Activated T-helper 2 cell treated with anti-CD3 and anti-CD28 coated beads, Interferon-gamma antibody, Interleukin-2, Interleukin-4, amounts not matched to agents 10 μg/mL and 5 μg/mL and 100 μg/mL, durations not matched to agents 14 hours and 24 hours and 36 hours (primary cell): ENCODE measurements at regions of chr4 and their contacts with region 1.

Region 1: GRCh38 chr4:40699648-40700047 is 50.1 kb upstream of the NSUN7 start:
- DNase-seq: no peak
- H3K4me3 Mint-ChIP-seq: peak overlapping the region; percentile 2
- H3K27ac Mint-ChIP-seq: peak overlapping the region; percentile 74
- H3K4me1 Mint-ChIP-seq: peaks cover 37% of the 10 kb centered on the region
- H3K27me3 Mint-ChIP-seq: no peaks in the 10 kb centered on the region

Region 2: GRCh38 chr4:40462326-40462725 is 237.3 kb before region 1 on chr4:
- intact Hi-C with region 1: loop called (anchors 10 kb)
- DNase-seq: no peak
- H3K4me3 Mint-ChIP-seq: no peak overlapping the region
- H3K27ac Mint-ChIP-seq: peak overlapping the region; percentile 17
- H3K4me1 Mint-ChIP-seq: peaks cover 32% of the 10 kb centered on the region
- H3K27me3 Mint-ChIP-seq: no peaks in the 10 kb centered on the region

Region 3: GRCh38 chr4:40550948-40551462 is 148.6 kb before region 1 on chr4:
- intact Hi-C with region 1: loop called (anchors 5 kb)
- DNase-seq: peak; percentile 21
- H3K4me3 Mint-ChIP-seq: peak overlapping the region; percentile 81
- H3K27ac Mint-ChIP-seq: peak overlapping the region; percentile 87
- H3K4me1 Mint-ChIP-seq: peaks cover 48% of the 10 kb centered on the region
- H3K27me3 Mint-ChIP-seq: no peaks in the 10 kb centered on the region

Region 4: DNA sequence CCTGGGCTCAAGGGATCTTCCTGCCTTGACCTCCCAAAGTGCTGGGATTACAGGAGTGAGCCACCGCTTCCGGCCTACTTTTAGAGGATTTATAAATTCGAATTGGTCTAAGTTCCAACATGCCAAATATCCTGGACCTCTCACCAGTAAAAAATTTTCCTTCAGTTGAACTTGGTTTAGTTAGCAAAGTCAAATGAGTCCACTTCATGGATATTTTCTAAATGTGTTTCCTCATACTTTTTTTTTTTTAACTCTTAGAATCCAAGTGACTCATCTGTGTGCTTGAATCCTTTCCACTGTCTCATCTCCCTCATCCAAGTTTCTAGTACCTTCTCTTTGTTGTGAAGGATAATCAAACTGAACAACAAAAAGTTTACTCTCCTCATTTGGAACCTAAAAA is 119.7 kb before region 1 on chr4:
- intact Hi-C with region 1: loop called (anchors 1 kb)
- DNase-seq: no peak
- H3K4me3 Mint-ChIP-seq: no peak overlapping the region
- H3K27ac Mint-ChIP-seq: peak overlapping the region; percentile 38
- H3K4me1 Mint-ChIP-seq: peaks cover 56% of the 10 kb centered on the region
- H3K27me3 Mint-ChIP-seq: peaks cover 1% of the 10 kb centered on the region

Region 5: DNA sequence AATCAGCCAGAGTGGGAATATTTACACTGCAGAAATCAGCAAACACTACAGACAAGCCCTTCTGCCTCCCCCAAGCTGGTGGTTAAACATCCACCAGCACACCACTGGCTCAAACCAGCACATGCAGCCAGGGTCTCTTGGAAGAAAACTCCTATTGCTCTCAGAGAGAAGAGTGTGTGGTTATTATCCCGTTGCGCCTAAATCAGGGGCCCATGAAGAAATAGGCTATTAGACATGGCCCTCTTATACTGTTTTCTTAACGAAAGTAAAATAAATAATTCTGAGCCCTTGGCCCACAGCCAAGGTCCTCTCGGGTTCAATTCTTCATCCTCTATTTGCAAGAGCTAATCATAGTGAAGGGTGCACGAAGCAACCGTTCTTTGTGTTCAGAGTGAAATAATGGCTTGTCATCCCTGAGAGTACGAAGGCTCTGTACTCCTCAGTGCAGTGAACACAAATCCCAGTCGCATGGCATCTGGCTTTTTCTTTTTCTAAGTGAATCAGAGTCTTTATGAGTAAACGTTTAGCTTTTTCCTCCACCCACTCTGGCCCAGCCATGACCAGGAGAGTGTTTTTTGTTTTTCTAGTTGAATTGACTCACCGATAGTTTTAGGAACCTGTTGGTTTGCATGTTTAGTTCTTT is 36.6 kb before region 1 on chr4:
- intact Hi-C with region 1: loop called (anchors 1 kb)
- DNase-seq: no peak
- H3K4me3 Mint-ChIP-seq: no peak overlapping the region
- H3K27ac Mint-ChIP-seq: peak overlapping the region; percentile 85
- H3K4me1 Mint-ChIP-seq: peaks cover 30% of the 10 kb centered on the region
- H3K27me3 Mint-ChIP-seq: no peaks in the 10 kb centered on the region

Region 6: GRCh38 chr4:40672536-40673526 is 26.8 kb before region 1 on chr4:
- intact Hi-C with region 1: loop called (anchors 1 kb)
- DNase-seq: peak; percentile 63
- H3K4me3 Mint-ChIP-seq: peak overlapping the region; percentile 51
- H3K27ac Mint-ChIP-seq: peak overlapping the region; percentile 90
- H3K4me1 Mint-ChIP-seq: peaks cover 53% of the 10 kb centered on the region
- H3K27me3 Mint-ChIP-seq: no peaks in the 10 kb centered on the region

Region 7: DNA sequence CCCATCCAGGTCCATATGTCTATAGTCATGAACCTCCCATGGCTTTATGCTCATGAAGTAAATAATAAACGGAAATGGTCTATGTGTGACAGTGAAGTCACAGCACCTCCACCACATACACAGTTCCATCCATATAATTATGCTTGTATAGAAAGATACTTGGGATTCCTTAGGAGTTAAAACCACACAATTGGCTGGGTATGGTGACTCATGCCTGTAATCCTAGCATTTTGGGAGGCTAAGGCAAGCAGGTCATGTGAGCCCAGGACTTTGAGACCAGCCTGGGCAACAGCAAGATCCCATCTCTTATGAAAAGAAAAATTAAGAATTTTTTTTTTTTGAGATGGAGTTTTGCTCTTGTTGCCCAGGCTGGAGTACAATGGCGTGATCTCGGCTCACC is 14.3 kb before region 1 on chr4:
- intact Hi-C with region 1: loop called (anchors 1 kb)
- DNase-seq: no peak
- H3K4me3 Mint-ChIP-seq: no peak overlapping the region
- H3K27ac Mint-ChIP-seq: no peak overlapping the region
- H3K4me1 Mint-ChIP-seq: peaks cover 45% of the 10 kb centered on the region
- H3K27me3 Mint-ChIP-seq: no peaks in the 10 kb centered on the region

Region 8: DNA sequence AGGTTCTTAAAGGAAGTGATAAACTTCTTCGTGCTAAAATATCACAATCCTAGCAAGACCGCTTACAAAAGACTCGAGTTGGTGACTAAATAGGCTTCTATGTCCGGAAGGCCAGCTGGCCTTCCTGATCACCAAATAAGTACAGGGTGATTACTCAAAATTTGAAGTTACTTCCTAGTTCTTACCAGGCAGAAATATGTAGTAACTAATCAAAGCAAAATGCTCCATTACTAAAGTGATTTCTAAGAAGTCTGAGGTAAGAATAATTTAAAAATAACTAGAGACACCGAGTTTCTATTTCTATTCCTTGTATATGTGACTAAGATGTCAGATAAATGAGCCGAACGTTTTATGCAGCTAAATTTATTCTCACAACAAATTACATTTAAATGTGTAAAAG is 112.3 kb after region 1 on chr4:
- intact Hi-C with region 1: no loop called
- DNase-seq: no peak
- H3K4me3 Mint-ChIP-seq: no peak overlapping the region
- H3K27ac Mint-ChIP-seq: no peak overlapping the region
- H3K4me1 Mint-ChIP-seq: no peaks in the 10 kb centered on the region
- H3K27me3 Mint-ChIP-seq: peaks cover 16% of the 10 kb centered on the region

Region 9: GRCh38 chr4:40856822-40857362 is 157.2 kb after region 1 on chr4:
- intact Hi-C with region 1: no loop called
- DNase-seq: peak; percentile 55
- H3K4me3 Mint-ChIP-seq: peak overlapping the region; percentile 61
- H3K27ac Mint-ChIP-seq: no peak overlapping the region
- H3K4me1 Mint-ChIP-seq: peaks cover 4% of the 10 kb centered on the region
- H3K27me3 Mint-ChIP-seq: peaks cover 60% of the 10 kb centered on the region

Region 10: GRCh38 chr4:40908702-40909362 is 209.2 kb after region 1 on chr4:
- intact Hi-C with region 1: no loop called
- DNase-seq: peak; percentile 59
- H3K4me3 Mint-ChIP-seq: no peak overlapping the region
- H3K27ac Mint-ChIP-seq: peak overlapping the region; percentile 85
- H3K4me1 Mint-ChIP-seq: peaks cover 21% of the 10 kb centered on the region
- H3K27me3 Mint-ChIP-seq: no peaks in the 10 kb centered on the region